Activated CD4-positive, alpha-beta T cell treated with anti-CD3 and anti-CD28 coated beads for 36 hours (primary cell): ENCODE measurements at regions of chr19 and their contacts with region 1.

Region 1: DNA sequence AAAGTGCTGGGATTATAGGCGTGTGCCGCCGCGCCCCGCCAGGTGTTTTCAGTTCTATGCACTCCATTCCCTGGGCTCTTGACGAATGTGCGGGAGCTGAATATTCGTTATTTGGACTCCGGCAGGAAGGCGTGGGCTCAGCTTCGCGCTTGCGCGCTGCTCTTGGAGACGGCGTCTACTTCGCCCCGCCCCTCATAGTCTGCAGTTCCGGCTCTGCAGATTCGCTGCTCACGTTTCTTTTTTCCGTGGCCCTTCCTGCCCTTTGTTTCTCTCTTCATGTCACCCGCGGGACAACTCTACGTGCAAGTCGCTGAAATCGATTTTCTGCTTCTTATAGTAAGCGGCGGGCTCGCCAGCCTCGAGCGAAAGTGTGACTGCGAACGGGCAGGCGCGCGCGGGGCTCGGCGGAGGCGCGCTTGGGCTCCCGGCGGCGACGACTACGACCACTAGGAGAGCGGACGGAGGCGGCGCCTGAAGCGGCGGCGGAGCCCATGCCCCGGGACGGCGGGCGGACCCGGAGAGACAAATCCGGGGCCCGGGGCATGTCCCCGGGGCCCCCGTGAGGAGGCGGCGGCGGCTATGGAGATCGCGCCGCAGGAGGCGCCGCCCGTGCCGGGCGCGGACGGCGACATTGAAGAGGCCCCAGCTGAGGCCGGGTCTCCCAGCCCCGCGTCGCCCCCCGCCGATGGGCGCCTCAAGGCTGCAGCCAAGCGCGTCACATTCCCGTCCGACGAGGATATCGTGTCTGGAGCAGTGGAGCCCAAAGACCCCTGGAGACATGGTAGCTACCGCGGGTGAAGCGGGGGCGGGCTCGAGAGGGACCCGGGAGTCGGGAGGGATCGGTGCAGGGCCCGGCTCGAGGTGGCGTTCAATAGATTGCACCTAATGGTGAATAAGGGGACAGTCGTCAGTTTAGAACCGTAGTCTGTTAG is at the start of gene PPP1R37:
- DNase-seq: peak; percentile 95
- ATAC-seq: peak; percentile 71
- H3K4me3 Mint-ChIP-seq: peak within 1 kb of the TSS; percentile 89
- H3K27ac Mint-ChIP-seq: peak within 1 kb of the TSS; percentile 97
- H3K4me1 Mint-ChIP-seq: peaks cover 54% of the 10 kb centered on the region
- H3K27me3 Mint-ChIP-seq: no peaks in the 10 kb centered on the region
- total RNA-seq, gene PPP1R37: 12.5 to 14.1 TPM

Region 2: GRCh38 chr19:44845612-44846454 is 247.2 kb before region 1 on chr19 and contains the start of gene NECTIN2:
- CTCF ChIA-PET with region 1: no interaction called
- POLR2A ChIA-PET with region 1: no interaction called
- intact Hi-C with region 1: loop called in 1 of 2 experiments (anchors 1 kb)
- DNase-seq: peak; percentile 98
- ATAC-seq: peak; percentile 77
- H3K4me3 Mint-ChIP-seq: peak within 1 kb of the TSS; percentile 73
- H3K27ac Mint-ChIP-seq: peak within 1 kb of the TSS; percentile 10
- H3K4me1 Mint-ChIP-seq: peaks cover 21% of the 10 kb centered on the region
- H3K27me3 Mint-ChIP-seq: peaks cover 21% of the 10 kb centered on the region
- total RNA-seq, gene NECTIN2: 0.80 to 0.93 TPM

Region 3: GRCh38 chr19:45038931-45039893 is 53.8 kb before region 1 on chr19 and contains the start of gene CLASRP:
- CTCF ChIA-PET with region 1: interaction called, 5 read pairs
- POLR2A ChIA-PET with region 1: interaction called, 8 read pairs
- intact Hi-C with region 1: loop called in 1 of 2 experiments (anchors 1 kb)
- DNase-seq: peak; percentile 94
- ATAC-seq: peak; percentile 96
- H3K4me3 Mint-ChIP-seq: peak within 1 kb of the TSS; percentile 97
- H3K27ac Mint-ChIP-seq: peak within 1 kb of the TSS; percentile 96
- H3K4me1 Mint-ChIP-seq: peaks cover 32% of the 10 kb centered on the region
- H3K27me3 Mint-ChIP-seq: no peaks in the 10 kb centered on the region
- total RNA-seq, gene CLASRP: 101 to 103 TPM

Region 4: GRCh38 chr19:45103156-45103507 is 10.1 kb after region 1 on chr19:
- CTCF ChIA-PET with region 1: interaction called, 19 read pairs
- POLR2A ChIA-PET with region 1: interaction called, 10 read pairs
- intact Hi-C with region 1: no loop called
- DNase-seq: peak; percentile 68
- ATAC-seq: peak; percentile 94
- H3K4me3 Mint-ChIP-seq: peak overlapping the region; percentile 17
- H3K27ac Mint-ChIP-seq: peak overlapping the region; percentile 65
- H3K4me1 Mint-ChIP-seq: peaks cover 53% of the 10 kb centered on the region
- H3K27me3 Mint-ChIP-seq: no peaks in the 10 kb centered on the region

Region 5: GRCh38 chr19:45125926-45126493 is 33.0 kb after region 1 on chr19:
- CTCF ChIA-PET with region 1: interaction called, 4 read pairs
- POLR2A ChIA-PET with region 1: interaction called, 3 read pairs
- intact Hi-C with region 1: loop called (anchors 1 to 5 kb)
- DNase-seq: peak; percentile 87
- ATAC-seq: peak; percentile 85
- H3K4me3 Mint-ChIP-seq: no peak overlapping the region
- H3K27ac Mint-ChIP-seq: no peak overlapping the region
- H3K4me1 Mint-ChIP-seq: peaks cover 24% of the 10 kb centered on the region
- H3K27me3 Mint-ChIP-seq: no peaks in the 10 kb centered on the region

Region 6: DNA sequence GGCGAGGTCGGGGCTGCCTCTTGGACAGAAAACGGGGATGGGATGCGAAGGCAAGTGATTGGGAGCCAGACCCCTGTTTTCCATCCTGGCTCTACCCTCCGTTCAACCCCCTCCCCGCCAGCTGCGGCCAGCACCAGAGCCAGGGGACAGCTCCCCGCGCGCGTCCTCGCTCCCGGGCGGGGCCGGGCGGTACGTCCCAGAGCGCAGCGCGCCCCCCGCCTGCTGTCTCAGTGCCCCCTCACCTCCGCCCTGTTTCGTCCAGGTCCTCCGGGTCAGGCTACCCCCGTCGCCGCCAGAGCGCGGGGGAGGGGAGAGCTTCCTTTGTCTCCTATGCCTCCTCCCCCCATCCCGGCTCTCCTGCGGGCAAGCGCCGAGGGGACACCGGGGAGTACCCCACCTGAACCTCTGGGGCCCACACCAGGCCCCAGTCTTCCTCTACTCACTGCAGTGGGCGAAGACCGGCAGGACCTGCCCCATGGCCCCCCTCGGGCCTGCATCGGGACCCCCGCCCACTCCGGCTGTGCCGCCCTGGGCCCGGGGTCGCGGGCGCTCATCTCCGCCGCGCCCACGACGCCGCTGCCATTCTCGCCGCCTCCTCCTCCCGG is 403.4 kb after region 1 on chr19:
- CTCF ChIA-PET with region 1: no interaction called
- POLR2A ChIA-PET with region 1: no interaction called
- intact Hi-C with region 1: loop called in 1 of 2 experiments (anchors 5 kb)
- DNase-seq: peak; percentile 74
- ATAC-seq: peak; percentile 1
- H3K4me3 Mint-ChIP-seq: peak overlapping the region; percentile 6
- H3K27ac Mint-ChIP-seq: no peak overlapping the region
- H3K4me1 Mint-ChIP-seq: peaks cover 43% of the 10 kb centered on the region
- H3K27me3 Mint-ChIP-seq: peaks cover 31% of the 10 kb centered on the region